ENCODE measurements at regions of chr6 and their contacts with region 1.

Region 1: GRCh38 chr6:125974214-125974866 is 12.0 kb upstream of the TRMT11 start:
- DNase-seq: no peak
- H3K4me3 ChIP-seq: no peak overlapping the region
- H3K27ac ChIP-seq: no peak overlapping the region
- H3K4me1 ChIP-seq: no peaks in the 10 kb centered on the region
- H3K27me3 ChIP-seq: no peaks in the 10 kb centered on the region
- CTCF ChIP-seq: peak in 1 of 3 experiments; percentile 22; a peak in 1 of 4 replicates
- EP300 ChIP-seq: no peak
- POLR2A ChIP-seq: no peak
- RAD21 ChIP-seq: peak; percentile 26 to 38

Region 2: DNA sequence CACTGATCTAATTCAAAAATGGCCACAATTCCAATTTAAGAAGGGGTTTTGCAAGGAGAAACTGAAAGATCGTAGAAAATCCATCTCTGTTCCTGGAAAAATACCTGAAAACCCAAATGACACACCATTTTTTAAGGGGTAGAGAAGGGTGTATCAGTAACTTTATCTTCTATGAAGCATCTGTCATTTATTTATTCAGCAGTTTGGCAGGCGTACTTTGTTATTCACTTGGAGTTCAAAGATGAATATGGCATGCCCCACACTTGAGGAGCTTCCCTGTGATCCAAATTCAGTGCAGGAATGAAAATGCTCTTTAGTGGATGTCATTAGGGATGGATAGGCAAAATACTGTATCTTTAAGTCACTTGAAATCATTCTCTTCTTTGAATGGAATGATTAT is 10.5 kb before region 1 on chr6:
- CTCF ChIA-PET with region 1: interaction called, 27 read pairs
- POLR2A ChIA-PET with region 1: interaction called, 3 read pairs
- DNase-seq: no peak
- H3K4me3 ChIP-seq: no peak overlapping the region
- H3K27ac ChIP-seq: no peak overlapping the region
- H3K4me1 ChIP-seq: no peaks in the 10 kb centered on the region
- H3K27me3 ChIP-seq: no peaks in the 10 kb centered on the region
- CTCF ChIP-seq: no peak
- EP300 ChIP-seq: no peak
- POLR2A ChIP-seq: no peak
- RAD21 ChIP-seq: no peak

Region 3: DNA sequence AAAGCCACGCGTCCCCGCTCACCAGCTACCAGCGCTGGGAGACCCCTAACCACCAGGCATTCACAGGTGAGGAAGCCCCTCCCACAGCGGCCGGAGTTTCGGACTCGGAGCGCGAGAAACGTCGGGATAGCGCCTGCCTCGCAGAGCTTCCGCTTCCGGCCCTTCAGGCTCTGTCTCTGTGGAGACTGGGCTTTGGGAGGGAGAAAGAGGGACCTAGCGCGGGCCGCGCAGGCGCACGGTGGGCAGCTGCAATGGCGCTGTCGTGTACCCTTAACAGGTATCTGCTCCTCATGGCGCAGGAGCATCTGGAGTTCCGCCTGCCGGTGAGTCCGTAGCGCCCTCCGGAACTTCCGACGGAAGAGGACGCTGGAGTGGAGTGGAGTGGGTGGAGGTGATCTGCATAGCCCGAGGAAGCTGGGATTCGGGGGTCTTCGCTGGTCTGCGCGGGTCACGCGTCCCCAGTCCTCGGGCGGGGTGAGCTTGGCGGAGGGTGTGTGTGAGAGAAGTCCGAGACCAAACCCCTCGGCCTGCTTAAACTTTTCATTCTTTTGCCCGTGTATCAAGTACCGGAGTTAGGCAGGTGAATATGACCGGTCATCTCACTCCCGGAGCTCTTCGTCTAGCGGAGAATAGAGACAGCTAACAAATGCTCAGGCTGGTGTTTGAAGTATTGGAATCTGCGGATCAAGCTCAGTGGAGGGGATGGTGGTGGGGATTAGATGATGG is 12.1 kb after region 1 on chr6 and contains the start of gene TRMT11:
- CTCF ChIA-PET with region 1: interaction called, 11 read pairs
- POLR2A ChIA-PET with region 1: interaction called, 18 read pairs
- DNase-seq: peak; percentile 85 to 88
- H3K4me3 ChIP-seq: peak within 1 kb of the TSS; percentile 89 to 97 (median 90)
- H3K27ac ChIP-seq: peak within 1 kb of the TSS; percentile 82
- H3K4me1 ChIP-seq: peaks cover 0 to 10% (median 3%) of the 10 kb centered on the region in 4 experiments; a peak in 4 of 7 replicates
- H3K27me3 ChIP-seq: no peaks in the 10 kb centered on the region
- CTCF ChIP-seq: peak in 1 of 3 experiments; percentile 8; a peak in 1 of 4 replicates
- EP300 ChIP-seq: no peak
- POLR2A ChIP-seq: peak; percentile 90 to 92
- RAD21 ChIP-seq: no peak
- total RNA-seq, gene TRMT11: 23.3 and 32.4 TPM in 2 replicates

Region 4: DNA sequence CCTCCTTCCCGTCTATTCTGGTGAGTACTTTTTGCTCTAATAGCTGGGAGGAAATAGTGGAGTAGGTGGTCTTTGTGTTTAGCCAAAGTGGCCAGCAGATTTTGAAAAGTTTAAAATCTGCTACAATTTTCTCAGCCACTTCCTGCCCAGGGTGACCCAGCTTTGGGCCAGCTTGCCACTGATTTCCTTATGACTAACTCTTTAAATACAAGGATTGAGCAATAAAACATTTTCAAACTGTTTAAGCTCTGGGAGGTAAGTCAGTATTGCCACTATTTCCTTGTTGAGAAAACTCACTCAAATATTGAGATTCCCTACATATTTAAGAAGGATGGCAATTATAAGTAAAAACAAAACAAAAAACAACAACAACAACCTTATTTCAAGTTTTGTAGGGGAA is 66.5 kb after region 1 on chr6:
- CTCF ChIA-PET with region 1: no interaction called
- POLR2A ChIA-PET with region 1: no interaction called
- DNase-seq: no peak
- H3K4me3 ChIP-seq: no peak overlapping the region
- H3K27ac ChIP-seq: no peak overlapping the region
- H3K4me1 ChIP-seq: no peaks in the 10 kb centered on the region; a peak in 2 of 7 replicates
- H3K27me3 ChIP-seq: no peaks in the 10 kb centered on the region
- CTCF ChIP-seq: no peak
- EP300 ChIP-seq: no peak
- POLR2A ChIP-seq: no peak
- RAD21 ChIP-seq: no peak

Region 5: GRCh38 chr6:126199466-126199865 is 225.1 kb after region 1 on chr6:
- CTCF ChIA-PET with region 1: no interaction called
- POLR2A ChIA-PET with region 1: no interaction called
- DNase-seq: no peak
- H3K4me3 ChIP-seq: no peak overlapping the region
- H3K27ac ChIP-seq: no peak overlapping the region
- H3K4me1 ChIP-seq: no peaks in the 10 kb centered on the region
- H3K27me3 ChIP-seq: no peaks in the 10 kb centered on the region
- CTCF ChIP-seq: no peak
- EP300 ChIP-seq: no peak
- POLR2A ChIP-seq: no peak
- RAD21 ChIP-seq: no peak

Measured in H1 (cell line).